ENCODE measurements at regions of chr18 and their contacts with region 1.

Region 1: DNA sequence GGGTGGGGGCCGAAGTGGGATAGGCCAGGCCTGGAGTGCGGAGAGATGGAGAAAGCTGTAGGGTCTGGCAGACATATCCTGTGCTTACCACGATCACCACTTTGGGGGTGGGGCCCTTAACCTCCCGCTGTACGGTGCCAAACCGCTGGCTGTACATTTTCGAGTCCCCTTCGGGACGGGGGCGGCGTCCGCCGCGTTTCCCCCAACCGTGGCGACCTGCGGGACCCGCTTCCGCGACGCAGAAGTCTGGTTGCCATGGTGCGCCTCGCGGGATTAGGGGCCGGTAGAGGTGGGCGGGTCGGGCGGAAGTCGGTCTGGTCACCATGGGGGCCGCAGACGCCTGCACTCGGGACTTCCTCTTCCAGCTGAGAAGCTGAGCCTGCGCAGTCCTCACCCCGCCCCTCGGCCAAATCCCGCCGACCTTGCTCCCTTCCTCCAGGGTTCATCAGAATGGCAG is at the start of gene CFAP53:
- DNase-seq: peak; percentile 96
- H3K4me3 ChIP-seq: peak within 1 kb of the TSS; percentile 50 to 73 (median 66)
- H3K27ac ChIP-seq: peak within 1 kb of the TSS in 2 of 4 donors; percentile 12 to 24
- H3K4me1 ChIP-seq: peaks cover 0 to 25% (median 10%) of the 10 kb centered on the region in 4 donors
- H3K27me3 ChIP-seq: no peaks in the 10 kb centered on the region
- CTCF ChIP-seq: no peak
- EP300 ChIP-seq: no peak
- POLR2A ChIP-seq: no peak
- total RNA-seq, gene CFAP53: 0.27 TPM in 1 of 4 donors, not detected in the others

Region 2: GRCh38 chr18:49494660-49495059 is 771.6 kb before region 1 on chr18:
- intact Hi-C with region 1: loop called (anchors 5 kb)
- DNase-seq: no peak
- H3K4me3 ChIP-seq: no peak overlapping the region
- H3K27ac ChIP-seq: no peak overlapping the region
- H3K4me1 ChIP-seq: peaks cover 0 to 18% (median 11%) of the 10 kb centered on the region in 4 donors
- H3K27me3 ChIP-seq: peaks cover 0 to 9% (median 4%) of the 10 kb centered on the region in 3 donors
- CTCF ChIP-seq: no peak
- EP300 ChIP-seq: no peak
- POLR2A ChIP-seq: no peak

Region 3: GRCh38 chr18:49813319-49814146 is 452.7 kb before region 1 on chr18 and contains the start of gene ACAA2:
- intact Hi-C with region 1: loop called (anchors 5 kb)
- DNase-seq: peak; percentile 95
- H3K4me3 ChIP-seq: peak within 1 kb of the TSS; percentile 71 to 89 (median 82)
- H3K27ac ChIP-seq: peak within 1 kb of the TSS; percentile 91 to 96 (median 94)
- H3K4me1 ChIP-seq: peaks cover 0 to 28% (median 23%) of the 10 kb centered on the region in 4 donors
- H3K27me3 ChIP-seq: no peaks in the 10 kb centered on the region
- CTCF ChIP-seq: no peak
- EP300 ChIP-seq: no peak
- POLR2A ChIP-seq: peak; percentile 55 to 72
- total RNA-seq, gene ACAA2: 61.8 to 87.7 (median 63.2) TPM

Region 4: GRCh38 chr18:50281295-50281971 is 15.2 kb after region 1 on chr18 and contains the start of gene MBD1:
- intact Hi-C with region 1: loop called (anchors 2 kb)
- DNase-seq: peak; percentile 99
- H3K4me3 ChIP-seq: peak within 1 kb of the TSS; percentile 74 to 99 (median 92)
- H3K27ac ChIP-seq: peak within 1 kb of the TSS; percentile 93 to 96 (median 94)
- H3K4me1 ChIP-seq: peaks cover 0 to 34% (median 29%) of the 10 kb centered on the region in 4 donors
- H3K27me3 ChIP-seq: no peaks in the 10 kb centered on the region
- CTCF ChIP-seq: peak in 2 of 4 experiments; percentile 12 to 20
- EP300 ChIP-seq: no peak
- POLR2A ChIP-seq: peak; percentile 91
- total RNA-seq, gene MBD1: 58.9 to 93.6 (median 75.5) TPM

Region 5: GRCh38 chr18:50307738-50308470 is 41.6 kb after region 1 on chr18:
- intact Hi-C with region 1: loop called (anchors 5 kb)
- DNase-seq: peak; percentile 94
- H3K4me3 ChIP-seq: peak overlapping the region; percentile 26 to 52 (median 50)
- H3K27ac ChIP-seq: peak overlapping the region in 3 of 4 donors; percentile 33 to 45 (median 35)
- H3K4me1 ChIP-seq: peaks cover 0 to 11% (median 10%) of the 10 kb centered on the region in 4 donors
- H3K27me3 ChIP-seq: peaks cover 0 to 8% (median 0%) of the 10 kb centered on the region in 3 donors
- CTCF ChIP-seq: no peak
- EP300 ChIP-seq: no peak
- POLR2A ChIP-seq: no peak

Region 6: DNA sequence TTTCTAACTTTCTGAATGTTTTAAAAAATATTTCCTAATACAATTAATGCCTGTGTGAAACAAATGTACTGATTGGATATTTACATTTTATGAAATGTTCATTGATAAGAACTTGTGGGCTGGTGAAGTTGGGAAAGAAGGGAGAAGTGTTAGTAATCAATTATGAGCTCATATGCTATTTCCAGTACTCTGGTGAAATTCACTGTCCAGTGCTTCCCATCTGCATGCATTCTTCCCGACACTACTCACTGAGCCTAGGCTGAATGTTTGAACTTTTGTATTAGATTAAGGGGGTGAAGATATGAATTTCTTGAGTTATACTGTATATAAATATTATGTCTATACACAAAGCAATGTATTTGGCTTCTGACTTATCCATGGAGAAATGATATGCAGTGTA is 144.6 kb after region 1 on chr18:
- intact Hi-C with region 1: no loop called
- DNase-seq: no peak
- H3K4me3 ChIP-seq: no peak overlapping the region
- H3K27ac ChIP-seq: no peak overlapping the region
- H3K4me1 ChIP-seq: no peaks in the 10 kb centered on the region
- H3K27me3 ChIP-seq: peaks cover 0 to 11% (median 0%) of the 10 kb centered on the region in 3 donors
- CTCF ChIP-seq: no peak
- EP300 ChIP-seq: no peak
- POLR2A ChIP-seq: no peak

Measured in sigmoid colon (tissue), 7 donors.